Ovary (tissue), 10 donors: ENCODE measurements at regions of chr11 and their contacts with region 1.

Region 1: DNA sequence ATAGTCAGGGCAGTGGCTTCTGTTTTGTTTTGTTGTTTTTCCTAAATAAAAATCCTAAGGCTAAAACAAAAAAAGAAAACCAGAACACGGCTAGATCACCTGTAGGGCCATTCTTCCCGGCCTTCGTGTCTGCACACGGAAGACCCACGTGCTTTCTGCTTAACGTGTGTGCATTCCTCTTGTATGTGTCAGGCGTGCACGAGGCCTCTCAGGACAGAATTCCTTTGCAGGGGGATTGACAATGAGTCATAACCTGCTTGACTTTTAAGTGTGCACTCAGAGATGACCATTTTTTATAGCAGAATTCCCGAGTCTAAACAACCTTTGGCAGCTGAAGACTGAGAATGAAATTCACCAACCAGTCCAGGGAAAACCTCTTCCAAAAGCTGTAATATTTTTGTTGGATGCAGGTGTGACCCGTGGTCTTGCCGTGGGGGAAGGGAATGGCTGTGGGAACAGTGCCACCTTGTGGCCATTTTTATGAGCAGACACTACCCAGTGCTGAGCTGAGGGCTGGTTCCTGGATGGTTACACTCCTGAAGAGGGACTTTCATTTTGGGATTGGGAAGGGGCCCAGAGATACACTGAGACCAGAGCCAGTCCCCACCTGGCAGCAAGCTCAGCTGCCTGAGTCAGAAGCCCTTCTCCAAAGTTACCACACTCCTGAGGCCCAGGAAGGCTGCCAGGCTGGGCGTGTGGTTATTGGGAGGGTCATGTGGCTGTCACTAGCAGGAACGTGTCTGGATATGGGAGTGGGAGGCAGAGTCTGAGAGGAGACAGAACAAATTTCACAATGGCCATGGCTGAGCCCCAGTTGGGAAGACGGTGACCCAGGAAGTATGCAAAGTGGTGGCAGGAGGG is 35.8 kb upstream of the DKK3 start:
- DNase-seq: peak; percentile 74 to 87 (median 85)
- H3K4me3 ChIP-seq: no peak overlapping the region
- H3K27ac ChIP-seq: no peak overlapping the region
- H3K4me1 ChIP-seq: peaks cover 2% of the 10 kb centered on the region
- H3K27me3 ChIP-seq: no peaks in the 10 kb centered on the region
- CTCF ChIP-seq: peak; percentile 84 to 96 (median 88)
- EP300 ChIP-seq: peak; percentile 59
- POLR2A ChIP-seq: no peak

Region 2: GRCh38 chr11:11782532-11783110 is 261.6 kb before region 1 on chr11:
- intact Hi-C with region 1: no loop called
- DNase-seq: no peak
- H3K4me3 ChIP-seq: no peak overlapping the region
- H3K27ac ChIP-seq: no peak overlapping the region
- H3K4me1 ChIP-seq: no peaks in the 10 kb centered on the region
- H3K27me3 ChIP-seq: no peaks in the 10 kb centered on the region
- CTCF ChIP-seq: no peak
- EP300 ChIP-seq: no peak
- POLR2A ChIP-seq: no peak

Region 3: DNA sequence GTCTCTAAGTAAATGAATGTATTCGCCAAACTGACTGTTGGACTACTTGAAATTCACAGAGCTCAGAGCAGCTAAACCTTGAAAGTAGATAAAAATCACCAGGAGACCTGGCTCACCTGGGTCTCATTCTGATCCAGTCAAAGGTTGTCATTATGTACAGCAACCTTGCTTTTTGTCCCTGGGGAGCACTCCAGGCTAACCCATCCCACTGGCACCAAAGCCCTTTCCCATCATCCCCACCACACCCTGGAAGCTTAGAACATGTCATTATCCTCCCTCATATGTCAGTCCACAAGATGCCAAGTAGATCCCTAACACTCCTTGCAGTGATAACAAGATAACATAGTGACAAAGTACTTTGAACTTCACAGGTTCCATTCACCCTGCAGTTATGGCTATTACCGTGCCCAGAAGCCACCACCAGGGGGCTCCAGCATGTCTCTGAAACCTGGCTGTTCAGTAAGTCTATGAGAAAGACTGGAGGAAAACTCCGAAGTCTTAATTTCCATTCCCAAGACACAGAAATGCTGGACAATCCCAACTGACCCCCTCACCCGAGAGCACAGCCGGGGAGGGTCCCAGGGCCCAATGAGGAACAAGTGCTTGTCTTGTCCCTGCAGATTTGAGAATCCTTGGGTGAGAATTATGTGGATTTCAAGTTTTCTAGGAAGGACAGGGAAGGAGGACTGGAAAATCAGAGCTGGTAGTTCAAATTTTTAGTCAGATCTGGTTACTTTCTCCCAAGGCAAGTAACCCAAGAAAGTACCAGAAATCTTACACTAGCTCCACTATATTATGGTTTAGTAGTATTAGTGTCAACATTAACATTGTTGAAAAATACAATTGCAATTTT is 245.4 kb before region 1 on chr11:
- intact Hi-C with region 1: loop called in 3 of 4 experiments (anchors 5 to 10 kb)
- DNase-seq: peak; percentile 69 to 88 (median 82)
- H3K4me3 ChIP-seq: no peak overlapping the region
- H3K27ac ChIP-seq: no peak overlapping the region
- H3K4me1 ChIP-seq: no peaks in the 10 kb centered on the region
- H3K27me3 ChIP-seq: no peaks in the 10 kb centered on the region
- CTCF ChIP-seq: peak; percentile 41 to 74 (median 69)
- EP300 ChIP-seq: no peak
- POLR2A ChIP-seq: no peak

Region 4: DNA sequence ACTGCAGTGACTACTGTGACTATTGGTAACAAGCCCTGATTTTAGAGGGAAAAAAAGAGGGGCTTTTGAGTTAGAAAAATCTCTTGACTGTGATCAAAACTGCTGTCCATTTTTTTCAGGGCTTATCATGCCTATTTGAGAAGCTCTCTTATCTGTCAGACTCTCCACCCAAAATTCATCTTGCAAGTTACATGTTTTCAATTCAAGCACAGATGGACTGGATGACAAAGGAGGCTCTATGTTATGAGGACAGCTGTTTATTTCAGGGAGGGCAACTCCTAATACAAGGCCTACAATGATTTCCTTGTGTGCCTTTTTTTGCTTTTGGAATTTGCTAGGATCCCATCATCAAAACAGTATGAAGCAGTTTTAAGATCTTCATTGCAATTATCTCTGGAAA is 237.6 kb before region 1 on chr11:
- intact Hi-C with region 1: loop called in 2 of 4 experiments (anchors 10 kb)
- DNase-seq: no peak
- H3K4me3 ChIP-seq: no peak overlapping the region
- H3K27ac ChIP-seq: no peak overlapping the region
- H3K4me1 ChIP-seq: no peaks in the 10 kb centered on the region
- H3K27me3 ChIP-seq: no peaks in the 10 kb centered on the region
- CTCF ChIP-seq: no peak
- EP300 ChIP-seq: no peak
- POLR2A ChIP-seq: no peak

Region 5: GRCh38 chr11:11931461-11932055 is 112.6 kb before region 1 on chr11:
- intact Hi-C with region 1: loop called (anchors 2 to 5 kb)
- DNase-seq: peak in 1 of 5 donors; percentile 22
- H3K4me3 ChIP-seq: no peak overlapping the region
- H3K27ac ChIP-seq: no peak overlapping the region
- H3K4me1 ChIP-seq: no peaks in the 10 kb centered on the region
- H3K27me3 ChIP-seq: no peaks in the 10 kb centered on the region
- CTCF ChIP-seq: peak; percentile 34 to 65 (median 65)
- EP300 ChIP-seq: no peak
- POLR2A ChIP-seq: no peak

Region 6: GRCh38 chr11:12008790-12009616 is 35.2 kb before region 1 on chr11:
- intact Hi-C with region 1: no loop called
- DNase-seq: peak; percentile 20 to 67 (median 50)
- H3K4me3 ChIP-seq: peak overlapping the region; percentile 49
- H3K27ac ChIP-seq: peak overlapping the region in 1 of 2 donors; percentile 46
- H3K4me1 ChIP-seq: peaks cover 9% of the 10 kb centered on the region
- H3K27me3 ChIP-seq: no peaks in the 10 kb centered on the region
- CTCF ChIP-seq: no peak
- EP300 ChIP-seq: no peak
- POLR2A ChIP-seq: no peak

Region 7: DNA sequence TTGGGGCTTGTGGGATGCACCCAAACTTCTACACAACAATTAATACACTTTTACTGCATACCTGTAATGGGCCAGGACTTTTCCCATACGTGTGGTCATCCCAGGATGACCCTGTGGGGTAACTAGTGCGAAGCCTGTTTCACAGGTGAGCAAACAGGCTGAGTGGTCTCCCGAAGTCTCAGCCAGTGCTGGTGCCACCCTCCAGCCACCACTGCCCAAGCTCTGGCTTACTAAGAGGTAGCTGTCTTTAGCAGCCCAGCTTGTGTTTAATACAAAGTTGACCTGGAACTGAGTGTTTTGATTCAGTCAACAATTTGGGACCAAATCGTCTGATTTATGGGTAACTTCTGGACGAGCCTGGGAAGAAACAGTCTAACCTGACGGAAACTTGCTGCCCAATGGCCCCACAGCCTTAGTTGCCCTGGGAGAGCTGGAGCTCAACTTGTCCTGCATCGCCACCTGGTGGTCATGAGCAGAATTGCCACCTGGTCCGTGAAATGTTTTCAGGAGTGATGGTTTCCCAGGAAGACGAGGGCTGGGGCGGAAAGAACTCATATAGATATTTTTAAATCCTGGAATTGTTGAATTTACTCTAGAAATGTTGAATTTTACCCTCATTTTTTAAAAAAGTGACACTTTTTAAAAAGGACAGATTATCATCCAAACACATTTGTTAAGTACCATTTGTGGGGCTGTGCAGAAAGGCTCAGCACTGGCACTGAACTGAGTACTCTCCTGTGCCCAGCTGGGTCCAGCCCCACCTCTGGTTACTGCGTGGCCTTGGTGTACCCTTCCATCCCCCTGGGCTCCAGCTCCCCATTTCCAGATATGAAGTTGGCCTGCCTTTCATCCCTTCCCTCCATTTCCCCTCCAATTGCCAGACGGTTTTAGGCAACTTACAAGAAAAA is 237.6 kb after region 1 on chr11:
- intact Hi-C with region 1: loop called (anchors 2 kb)
- DNase-seq: peak; percentile 70 to 89 (median 87)
- H3K4me3 ChIP-seq: no peak overlapping the region
- H3K27ac ChIP-seq: no peak overlapping the region
- H3K4me1 ChIP-seq: peaks cover 5% of the 10 kb centered on the region
- H3K27me3 ChIP-seq: no peaks in the 10 kb centered on the region
- CTCF ChIP-seq: peak; percentile 86 to 98 (median 97)
- EP300 ChIP-seq: no peak
- POLR2A ChIP-seq: peak; percentile 14